Body of pancreas (tissue), 4 donors: ENCODE measurements at regions of chr1 and their contacts with region 1.

Region 1: DNA sequence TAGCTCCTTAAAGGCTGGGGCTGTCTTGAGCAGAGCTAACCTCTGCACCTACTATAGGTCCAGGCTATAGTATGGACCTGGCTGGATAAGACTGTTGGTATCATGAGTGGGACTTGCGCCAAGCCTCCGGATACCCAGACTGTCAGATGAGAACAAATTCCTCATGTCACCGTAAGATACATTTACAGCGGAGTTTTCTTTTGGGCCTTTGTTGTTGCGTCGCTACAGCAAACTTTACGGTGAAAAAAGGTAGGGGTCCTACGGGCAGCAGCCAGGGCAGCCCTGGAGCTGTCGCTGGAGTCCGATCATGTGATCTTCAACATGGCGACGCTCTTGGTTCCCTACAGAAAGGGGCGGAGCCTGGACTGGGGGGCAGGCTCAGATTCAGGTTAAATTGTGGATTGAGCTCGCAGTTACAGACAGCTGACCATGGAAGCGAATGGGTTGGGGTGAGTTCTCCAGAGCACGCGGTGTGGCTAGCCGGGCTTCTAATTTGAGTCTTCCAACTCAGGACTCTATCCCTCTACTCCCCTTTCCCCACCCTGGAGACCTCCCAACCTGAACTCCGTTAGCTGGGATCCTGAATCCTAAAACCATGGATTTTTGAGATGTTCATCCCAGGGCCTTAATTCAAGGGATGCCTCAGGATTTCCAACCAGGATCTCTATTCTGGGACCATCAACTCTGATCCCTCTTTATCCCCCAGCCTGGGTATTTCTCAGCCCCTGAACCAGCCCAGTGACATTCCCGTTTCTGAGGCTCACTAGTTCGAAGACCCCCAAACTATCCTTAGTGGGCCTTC is at the start of gene UROD:
- DNase-seq: peak; percentile 91 to 95 (median 94)
- ATAC-seq: peak; percentile 90
- H3K4me3 ChIP-seq: peak within 1 kb of the TSS; percentile 99 to 100
- H3K27ac ChIP-seq: peak within 1 kb of the TSS; percentile 67 to 88 (median 80)
- H3K4me1 ChIP-seq: peaks cover 43% of the 10 kb centered on the region
- H3K27me3 ChIP-seq: no peaks in the 10 kb centered on the region
- CTCF ChIP-seq: peak in 2 of 7 experiments; percentile 14 to 19
- POLR2A ChIP-seq: peak in 2 of 3 donors; percentile 73 to 75
- total RNA-seq, gene UROD: 32.2 to 39.6 TPM

Region 2: DNA sequence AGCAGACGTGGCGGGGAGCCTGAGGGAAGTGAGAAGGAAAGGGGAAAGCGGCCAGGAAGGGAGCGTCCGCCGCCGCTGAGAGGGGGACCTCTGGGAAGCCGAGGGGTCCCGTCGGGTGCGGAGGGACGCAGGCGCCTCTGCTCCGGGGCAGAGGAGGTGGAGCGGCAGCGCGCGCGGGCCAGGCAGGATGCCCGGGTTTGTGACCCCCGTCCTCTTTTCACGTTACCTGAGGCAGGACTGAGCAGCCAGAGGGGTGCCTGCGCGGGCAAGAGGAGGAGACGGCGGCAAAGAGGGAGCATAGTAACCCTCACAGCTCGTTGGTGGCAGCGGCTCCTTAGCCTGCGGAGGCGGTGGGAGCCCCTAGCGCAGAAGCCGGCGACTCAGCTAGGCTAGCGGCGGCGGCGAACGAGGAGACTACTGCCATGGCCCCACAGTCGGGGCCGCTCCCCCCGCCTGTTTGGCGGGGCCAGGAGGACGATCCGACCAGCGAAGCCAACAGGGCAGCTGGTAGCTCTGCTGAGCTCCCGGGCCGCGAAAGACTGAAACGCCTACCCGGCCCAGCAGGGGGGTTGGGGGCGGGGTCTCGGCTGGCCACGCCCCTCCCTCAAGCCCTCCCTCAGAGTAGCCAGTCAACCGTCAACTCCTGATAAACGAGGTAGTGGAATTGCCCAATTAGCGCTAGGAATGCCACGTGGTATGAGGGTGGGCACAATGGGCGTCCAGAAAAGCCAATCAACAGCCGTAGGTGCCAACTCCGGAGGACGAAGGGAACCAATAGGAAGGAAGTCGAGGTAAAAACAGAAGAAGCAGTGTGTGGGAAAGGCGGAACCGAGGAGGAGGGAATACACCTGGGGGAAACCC is 478.8 kb after region 1 on chr1 and contains the start of gene TESK2:
- intact Hi-C with region 1: loop called (anchors 10 kb)
- DNase-seq: peak; percentile 98 to 100 (median 99)
- ATAC-seq: peak; percentile 96
- H3K4me3 ChIP-seq: peak within 1 kb of the TSS; percentile 87 to 99
- H3K27ac ChIP-seq: peak within 1 kb of the TSS; percentile 77 to 90 (median 86)
- H3K4me1 ChIP-seq: peaks cover 11% of the 10 kb centered on the region
- H3K27me3 ChIP-seq: no peaks in the 10 kb centered on the region
- CTCF ChIP-seq: peak in 4 of 7 experiments; percentile 28 to 54 (median 46)
- POLR2A ChIP-seq: peak; percentile 76 to 91 (median 89)
- total RNA-seq, gene TESK2: 0.33 to 3.6 TPM